MCF 10A (cell line): ENCODE measurements at regions of chr1 and their contacts with region 1.

Region 1: GRCh38 chr1:184805667-184806295 is 51.1 kb upstream of the EDEM3 start:
- DNase-seq: peak; percentile 95
- H3K4me3 Mint-ChIP-seq: no peak overlapping the region
- H3K27ac Mint-ChIP-seq: no peak overlapping the region
- H3K4me1 Mint-ChIP-seq: peaks cover 6% of the 10 kb centered on the region
- H3K27me3 Mint-ChIP-seq: peaks cover 46% of the 10 kb centered on the region
- CTCF ChIP-seq: peak; percentile 99

Region 2: GRCh38 chr1:184563308-184563707 is 242.5 kb before region 1 on chr1:
- CTCF ChIA-PET with region 1: no interaction called
- POLR2A ChIA-PET with region 1: no interaction called
- intact Hi-C with region 1: no loop called
- DNase-seq: peak; percentile 56
- H3K4me3 Mint-ChIP-seq: no peak overlapping the region
- H3K27ac Mint-ChIP-seq: no peak overlapping the region
- H3K4me1 Mint-ChIP-seq: peaks cover 32% of the 10 kb centered on the region
- H3K27me3 Mint-ChIP-seq: no peaks in the 10 kb centered on the region
- CTCF ChIP-seq: peak; percentile 57

Region 3: DNA sequence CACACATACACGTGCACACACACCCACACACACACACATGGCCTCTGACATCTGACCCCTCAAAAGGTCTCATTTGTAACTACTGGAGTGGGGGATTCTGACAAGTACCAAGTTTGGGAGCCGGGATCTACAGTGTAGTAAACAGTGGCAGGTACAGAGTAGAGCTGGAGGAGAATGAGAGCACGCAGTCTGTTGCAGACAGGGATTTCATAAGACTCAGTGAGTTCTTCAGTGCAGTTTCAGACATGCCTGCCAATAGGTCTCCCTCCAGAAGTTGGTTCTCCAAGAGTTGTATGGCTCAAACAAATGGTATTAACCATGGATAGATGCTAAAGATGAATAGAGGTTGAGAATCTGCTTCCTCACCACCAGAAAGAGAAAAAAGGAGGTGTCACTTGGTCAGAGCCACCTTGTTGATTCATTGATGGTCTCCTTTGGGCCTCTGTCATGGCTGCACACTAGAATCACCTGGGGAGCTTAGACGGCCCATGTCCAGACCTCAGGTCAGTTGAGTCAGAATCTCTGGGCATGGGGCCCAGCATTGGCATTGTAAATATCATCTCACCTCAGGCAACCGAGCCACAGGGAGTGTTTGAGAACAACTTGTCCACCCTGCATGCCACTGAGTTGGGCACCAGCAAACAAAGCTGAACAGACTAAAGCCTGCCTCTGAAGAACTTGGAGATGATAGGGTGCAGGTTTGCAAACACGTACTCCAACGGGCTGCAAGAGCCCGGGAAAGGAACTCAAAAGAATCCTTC is 173.2 kb before region 1 on chr1:
- CTCF ChIA-PET with region 1: no interaction called
- POLR2A ChIA-PET with region 1: no interaction called
- intact Hi-C with region 1: no loop called
- DNase-seq: peak; percentile 95
- H3K4me3 Mint-ChIP-seq: peak overlapping the region; percentile 4
- H3K27ac Mint-ChIP-seq: peak overlapping the region; percentile 86
- H3K4me1 Mint-ChIP-seq: peaks cover 64% of the 10 kb centered on the region
- H3K27me3 Mint-ChIP-seq: no peaks in the 10 kb centered on the region
- CTCF ChIP-seq: no peak

Region 4: DNA sequence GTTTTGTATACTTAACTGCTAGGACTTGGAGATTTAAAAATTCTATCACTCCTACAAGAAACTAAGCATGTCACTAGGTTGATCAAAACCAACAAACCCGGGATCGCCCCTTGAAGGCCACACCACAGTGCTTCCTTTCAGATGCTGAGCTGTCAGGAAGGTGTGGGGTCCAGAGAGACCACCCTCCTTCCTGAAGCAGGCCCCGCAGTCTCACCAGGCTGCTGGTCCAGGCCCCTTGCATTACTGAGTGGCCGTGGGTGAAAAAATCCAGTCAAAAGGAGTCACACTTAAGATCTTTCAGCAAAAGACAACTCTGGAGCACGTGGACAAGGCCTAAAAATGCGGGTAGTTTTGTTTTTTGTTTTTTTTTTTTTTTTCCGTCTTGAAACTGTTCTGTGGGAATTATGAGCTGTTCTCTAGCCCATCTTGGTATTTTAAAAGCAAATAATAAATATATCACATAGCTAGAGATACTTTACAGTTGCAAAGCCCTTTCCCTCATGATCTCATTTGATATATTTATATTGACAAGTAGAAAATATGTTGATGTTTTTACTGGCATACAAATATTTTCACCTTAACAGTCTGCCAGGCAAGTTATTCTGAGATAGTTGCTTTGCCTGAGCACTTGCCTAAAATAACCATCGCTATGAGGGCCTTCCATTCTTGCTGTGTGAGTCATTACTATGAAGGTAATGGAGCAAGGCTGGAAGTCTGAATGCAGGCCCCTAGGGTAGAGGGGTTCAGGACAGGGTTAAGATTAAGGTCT is 22.0 kb after region 1 on chr1:
- CTCF ChIA-PET with region 1: interaction called, 41 read pairs
- POLR2A ChIA-PET with region 1: interaction called, 3 read pairs
- intact Hi-C with region 1: no loop called
- DNase-seq: peak; percentile 75
- H3K4me3 Mint-ChIP-seq: no peak overlapping the region
- H3K27ac Mint-ChIP-seq: no peak overlapping the region
- H3K4me1 Mint-ChIP-seq: peaks cover 10% of the 10 kb centered on the region
- H3K27me3 Mint-ChIP-seq: peaks cover 81% of the 10 kb centered on the region
- CTCF ChIP-seq: no peak

Region 5: DNA sequence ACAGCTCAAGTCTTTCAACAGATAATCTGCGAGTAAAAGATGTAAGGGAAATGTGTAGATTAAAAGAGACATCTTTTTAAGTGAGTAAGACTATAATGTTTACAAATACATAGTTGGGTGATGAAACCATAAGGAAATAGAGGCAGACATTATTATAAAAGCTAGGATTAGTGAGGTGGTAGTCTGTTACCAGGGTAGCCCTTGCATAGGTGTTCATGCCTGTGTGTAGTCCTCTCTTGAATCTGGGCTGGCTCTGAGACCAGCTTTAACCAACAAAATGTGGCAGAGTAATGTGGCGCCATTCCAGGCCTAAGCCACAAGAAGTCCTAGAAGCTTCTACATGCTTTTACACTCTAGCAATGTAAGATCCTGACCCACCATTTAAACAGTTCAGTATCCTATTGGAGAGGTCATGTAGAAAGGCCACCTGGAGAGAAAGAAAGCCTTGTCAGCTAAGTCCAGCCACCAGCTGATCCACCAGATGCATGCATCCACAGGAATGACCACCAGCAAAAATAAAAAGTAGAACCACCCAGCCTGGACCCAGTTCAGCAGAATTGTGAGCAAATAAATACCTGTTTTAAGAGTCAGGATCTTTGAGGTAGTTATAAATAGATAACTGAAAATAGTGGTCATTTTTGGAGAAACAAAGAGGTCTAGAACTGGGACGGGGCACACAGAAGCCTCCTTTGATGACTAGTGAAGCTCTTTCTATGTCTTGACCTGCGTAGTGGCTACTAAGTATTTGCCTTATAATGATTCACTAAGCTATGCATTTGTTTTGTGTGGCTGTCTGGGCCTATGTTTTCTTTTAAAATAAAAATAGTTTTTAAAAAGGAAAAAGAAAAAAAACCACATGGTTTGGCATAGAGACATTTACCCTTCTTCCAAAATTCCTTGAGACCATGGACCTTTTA is 160.4 kb after region 1 on chr1:
- CTCF ChIA-PET with region 1: interaction called, 77 read pairs
- POLR2A ChIA-PET with region 1: interaction called, 4 read pairs
- intact Hi-C with region 1: no loop called
- DNase-seq: no peak
- H3K4me3 Mint-ChIP-seq: no peak overlapping the region
- H3K27ac Mint-ChIP-seq: no peak overlapping the region
- H3K4me1 Mint-ChIP-seq: peaks cover 6% of the 10 kb centered on the region
- H3K27me3 Mint-ChIP-seq: peaks cover 71% of the 10 kb centered on the region
- CTCF ChIP-seq: no peak

Region 6: GRCh38 chr1:185044981-185045813 is 239.4 kb after region 1 on chr1 and contains the start of gene RNF2:
- CTCF ChIA-PET with region 1: interaction called, 6 read pairs
- POLR2A ChIA-PET with region 1: interaction called, 3 read pairs
- intact Hi-C with region 1: loop called (anchors 5 kb)
- DNase-seq: peak; percentile 72
- H3K4me3 Mint-ChIP-seq: peak within 1 kb of the TSS; percentile 91
- H3K27ac Mint-ChIP-seq: peak within 1 kb of the TSS; percentile 74
- H3K4me1 Mint-ChIP-seq: peaks cover 5% of the 10 kb centered on the region
- H3K27me3 Mint-ChIP-seq: no peaks in the 10 kb centered on the region
- CTCF ChIP-seq: peak; percentile 10
- total RNA-seq, gene RNF2: 18.6 and 19.0 TPM in 2 replicates

Region 7: GRCh38 chr1:185681034-185681633 is 875.4 kb after region 1 on chr1:
- CTCF ChIA-PET with region 1: interaction called, 12 read pairs
- POLR2A ChIA-PET with region 1: no interaction called
- intact Hi-C with region 1: loop called (anchors 2 kb)
- DNase-seq: peak; percentile 81
- H3K4me3 Mint-ChIP-seq: no peak overlapping the region
- H3K27ac Mint-ChIP-seq: no peak overlapping the region
- H3K4me1 Mint-ChIP-seq: no peaks in the 10 kb centered on the region
- H3K27me3 Mint-ChIP-seq: no peaks in the 10 kb centered on the region
- CTCF ChIP-seq: peak; percentile 60